Activated CD4-positive, alpha-beta memory T cell treated with anti-CD3 and anti-CD28 coated beads, Interleukin-2, amount 10 ng/mL, durations not matched to agents 7 days and 5 days (primary cell): ENCODE measurements at regions of chr2 and their contacts with region 1.

Region 1: DNA sequence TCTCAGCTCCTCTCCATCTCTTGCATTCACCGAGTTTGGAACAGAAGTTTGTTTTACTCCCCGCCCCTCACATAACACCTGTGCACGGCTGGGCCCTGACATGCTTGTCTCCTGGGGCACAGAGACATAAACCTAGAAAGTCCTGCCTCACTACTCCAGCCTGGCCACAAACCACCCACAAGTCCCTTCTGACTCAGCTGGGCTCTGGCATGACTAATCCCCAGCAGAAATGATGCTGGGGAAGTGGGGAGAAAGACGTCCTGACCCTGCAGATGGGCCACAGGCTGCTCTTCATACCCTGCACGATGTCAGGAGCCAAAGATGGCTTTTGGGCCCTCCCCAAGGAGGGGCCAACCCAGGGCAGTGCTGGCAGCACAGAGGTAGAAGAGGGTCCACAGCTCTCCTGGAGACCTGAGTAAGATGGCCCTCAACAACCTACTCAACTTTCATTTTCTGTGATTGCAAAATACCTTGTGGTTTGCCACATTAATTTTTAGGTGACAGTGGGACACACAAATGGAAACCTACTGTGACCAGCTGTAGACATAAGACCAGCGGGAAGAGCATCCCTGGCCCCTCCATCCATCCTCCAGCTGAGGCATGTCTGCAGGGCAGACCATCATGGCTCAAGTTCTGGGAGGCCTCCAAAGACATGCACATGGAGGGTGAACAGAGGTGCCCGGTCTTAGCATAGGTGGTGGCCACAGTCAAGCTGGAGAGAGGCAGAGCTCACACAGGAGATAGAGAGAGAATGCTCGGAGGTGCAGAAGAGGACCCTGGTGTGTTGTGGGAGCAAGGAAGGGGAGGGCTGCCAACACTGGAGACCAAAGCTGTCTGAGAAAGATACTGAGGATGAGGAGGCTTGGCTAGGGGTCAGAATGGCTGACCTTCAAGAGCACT is 40.0 kb downstream of the DNMT3A start:
- DNase-seq: peak; percentile 88
- H3K4me3 Mint-ChIP-seq: peak overlapping the region; percentile 9
- H3K27ac Mint-ChIP-seq: peak overlapping the region; percentile 63
- H3K4me1 Mint-ChIP-seq: peaks cover 36% of the 10 kb centered on the region
- H3K27me3 Mint-ChIP-seq: no peaks in the 10 kb centered on the region

Region 2: DNA sequence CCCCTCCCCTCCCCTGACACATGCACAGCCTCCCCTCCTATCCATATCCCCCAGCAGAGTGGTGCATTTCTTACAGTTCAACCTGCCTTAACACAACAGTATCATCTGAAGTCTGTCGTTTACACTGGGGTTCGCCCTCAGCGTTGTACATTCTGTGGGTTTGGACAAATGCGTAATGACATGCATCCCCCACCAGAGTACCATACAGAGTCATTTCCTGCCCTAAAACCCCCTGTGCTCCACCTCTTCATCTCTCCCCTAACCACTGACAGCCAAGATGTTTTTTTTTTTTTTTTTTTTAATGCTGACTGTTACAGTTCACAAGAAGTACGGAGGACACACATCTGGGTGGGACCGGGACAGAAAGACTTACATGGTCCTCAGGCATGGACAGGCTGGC is 155.9 kb before region 1 on chr2:
- CTCF ChIA-PET with region 1: no interaction called
- POLR2A ChIA-PET with region 1: no interaction called
- DNase-seq: no peak
- H3K4me3 Mint-ChIP-seq: no peak overlapping the region
- H3K27ac Mint-ChIP-seq: no peak overlapping the region
- H3K4me1 Mint-ChIP-seq: peaks cover 3% of the 10 kb centered on the region
- H3K27me3 Mint-ChIP-seq: peaks cover 15% of the 10 kb centered on the region

Region 3: GRCh38 chr2:25286025-25286400 is 15.7 kb before region 1 on chr2:
- CTCF ChIA-PET with region 1: no interaction called
- POLR2A ChIA-PET with region 1: interaction called, 58 read pairs
- DNase-seq: peak; percentile 85
- H3K4me3 Mint-ChIP-seq: peak overlapping the region; percentile 44
- H3K27ac Mint-ChIP-seq: peak overlapping the region; percentile 90
- H3K4me1 Mint-ChIP-seq: peaks cover 31% of the 10 kb centered on the region
- H3K27me3 Mint-ChIP-seq: no peaks in the 10 kb centered on the region

Region 4: DNA sequence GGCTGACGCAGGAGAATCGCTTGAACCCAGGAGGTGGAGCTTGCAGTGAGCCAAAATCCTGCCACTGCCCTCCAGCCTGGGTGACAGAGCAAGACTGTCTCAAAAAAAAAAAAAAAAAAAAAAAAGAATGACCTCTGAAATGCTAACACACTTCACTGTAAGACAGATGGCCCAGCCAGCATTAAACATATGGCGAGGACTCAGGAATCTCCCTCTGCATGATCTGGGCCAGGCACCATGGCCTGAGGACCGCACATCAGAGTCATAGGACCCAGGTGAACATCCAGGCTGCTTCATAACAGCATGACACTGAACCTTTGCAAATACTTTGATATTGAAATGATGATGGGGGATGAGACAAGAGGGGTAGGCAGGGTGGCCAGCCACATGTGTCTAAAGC is 96.1 kb after region 1 on chr2:
- CTCF ChIA-PET with region 1: no interaction called
- POLR2A ChIA-PET with region 1: no interaction called
- DNase-seq: no peak
- H3K4me3 Mint-ChIP-seq: no peak overlapping the region
- H3K27ac Mint-ChIP-seq: no peak overlapping the region
- H3K4me1 Mint-ChIP-seq: peaks cover 31% of the 10 kb centered on the region
- H3K27me3 Mint-ChIP-seq: no peaks in the 10 kb centered on the region